HEK293T (cell line): ENCODE measurements at regions of chr6 and their contacts with region 1.

Region 1: DNA sequence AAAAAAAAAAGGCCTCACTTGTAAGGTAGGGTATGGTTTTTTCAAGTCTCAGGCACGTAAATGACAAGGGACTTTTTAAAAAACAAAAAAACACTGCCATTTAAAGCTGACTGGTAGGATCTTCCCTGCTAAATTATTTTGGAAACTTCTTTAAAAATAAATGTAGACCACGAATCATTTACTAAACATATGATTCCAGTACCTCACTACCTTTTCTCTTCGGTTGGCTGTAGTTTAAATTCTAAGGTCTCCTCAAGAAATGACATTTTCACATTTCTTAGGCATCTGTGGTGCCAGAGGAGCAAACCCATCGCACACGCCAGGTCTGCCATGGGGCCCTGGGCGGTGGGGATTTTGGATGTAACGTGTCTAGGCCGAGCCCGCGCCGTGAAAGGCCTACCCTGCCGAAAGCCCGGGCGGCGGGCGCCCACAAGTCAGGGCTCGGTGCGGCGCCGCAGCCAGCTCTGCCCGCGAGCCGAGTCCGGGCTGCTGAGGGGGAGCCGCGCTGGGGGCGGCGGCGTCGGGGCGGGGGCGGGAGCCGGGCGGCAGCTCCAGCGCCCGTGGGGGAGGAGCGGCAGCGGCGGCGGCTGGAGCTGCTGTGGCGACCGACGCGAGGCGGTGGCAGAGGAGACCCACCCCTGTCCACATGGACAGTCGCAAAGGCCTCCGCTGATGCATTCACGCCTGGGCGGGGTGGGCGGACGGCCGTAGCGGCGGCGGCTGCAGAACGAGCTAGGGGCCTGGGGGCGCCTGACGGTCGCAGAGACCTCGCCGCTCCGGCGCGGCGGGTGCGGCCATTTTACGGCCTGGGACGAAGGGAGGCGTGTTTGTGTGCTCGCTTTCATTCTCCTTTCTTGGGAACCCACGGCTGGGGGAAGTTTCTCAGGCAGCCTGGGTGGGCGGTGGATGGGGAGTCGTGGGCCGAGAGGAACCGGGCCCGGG is at the start of gene SENP6:
- DNase-seq: peak; percentile 66

Region 2: GRCh38 chr6:75579951-75580350 is 21.6 kb before region 1 on chr6:
- CTCF ChIA-PET with region 1: no interaction called
- POLR2A ChIA-PET with region 1: interaction called, 10 read pairs
- DNase-seq: no peak

Region 3: GRCh38 chr6:75611702-75612375 is 10.3 kb after region 1 on chr6:
- CTCF ChIA-PET with region 1: no interaction called
- POLR2A ChIA-PET with region 1: interaction called, 18 read pairs
- DNase-seq: no peak

Region 4: DNA sequence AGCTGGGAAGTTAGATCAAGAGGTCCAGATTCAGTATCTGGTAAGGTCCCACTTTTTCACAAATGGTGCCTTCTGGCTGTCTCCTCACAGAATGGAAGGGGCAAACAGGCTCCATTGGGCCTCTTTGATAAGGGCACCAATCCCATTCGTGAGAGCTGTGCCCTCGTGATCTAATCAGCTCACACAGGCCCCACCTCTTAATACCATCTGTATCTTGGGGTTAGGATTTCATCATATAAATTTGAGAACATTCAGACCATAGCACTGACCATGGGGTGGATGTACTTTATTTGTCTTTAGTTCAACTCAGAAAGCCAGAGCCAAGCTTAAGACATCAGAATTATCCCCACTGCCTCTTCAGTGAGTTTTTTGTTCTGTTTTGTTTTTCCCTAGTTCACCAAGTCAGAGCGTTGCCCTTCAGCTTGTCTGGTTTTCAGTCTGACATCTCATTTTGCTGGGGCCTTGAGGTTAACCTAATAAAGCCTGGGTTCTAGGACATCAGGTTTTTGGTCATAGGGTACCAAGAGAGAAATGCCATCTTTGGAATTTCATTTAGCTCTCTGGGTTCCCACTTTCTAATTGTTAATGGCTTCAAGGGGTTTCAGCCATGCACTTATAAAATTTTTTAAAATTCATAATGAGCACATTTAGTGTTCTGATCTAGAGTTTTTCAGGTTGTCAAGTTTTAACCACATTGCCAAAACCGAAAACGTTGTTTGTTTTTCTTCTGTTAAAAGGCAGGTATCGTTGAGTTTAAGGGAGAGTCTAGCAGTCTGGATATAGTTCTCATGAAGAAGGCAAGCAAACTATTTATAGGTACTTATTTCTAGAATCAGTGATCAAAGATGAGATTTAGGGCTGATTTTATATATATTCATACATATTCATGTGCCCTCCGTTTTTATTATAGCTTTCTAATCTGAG is 19.1 kb after region 1 on chr6:
- CTCF ChIA-PET with region 1: no interaction called
- POLR2A ChIA-PET with region 1: interaction called, 18 read pairs
- DNase-seq: no peak